A673 (cell line): ENCODE measurements at regions of chr3 and their contacts with region 1.

Region 1: GRCh38 chr3:74613521-74614106 is 845 bp downstream of the CNTN3 start:
- DNase-seq: no peak
- H3K4me3 ChIP-seq: peak overlapping the region; percentile 38
- H3K27ac ChIP-seq: no peak overlapping the region
- H3K4me1 ChIP-seq: peaks cover 15% of the 10 kb centered on the region
- H3K27me3 ChIP-seq: no peaks in the 10 kb centered on the region
- CTCF ChIP-seq: no peak

Region 2: GRCh38 chr3:74410276-74410941 is 203.2 kb before region 1 on chr3:
- CTCF ChIA-PET with region 1: no interaction called
- POLR2A ChIA-PET with region 1: no interaction called
- intact Hi-C with region 1: no loop called
- DNase-seq: no peak
- H3K4me3 ChIP-seq: no peak overlapping the region
- H3K27ac ChIP-seq: no peak overlapping the region
- H3K4me1 ChIP-seq: no peaks in the 10 kb centered on the region
- H3K27me3 ChIP-seq: no peaks in the 10 kb centered on the region
- CTCF ChIP-seq: no peak

Region 3: GRCh38 chr3:74420538-74421124 is 193.0 kb before region 1 on chr3:
- CTCF ChIA-PET with region 1: no interaction called
- POLR2A ChIA-PET with region 1: no interaction called
- intact Hi-C with region 1: no loop called
- DNase-seq: no peak
- H3K4me3 ChIP-seq: no peak overlapping the region
- H3K27ac ChIP-seq: no peak overlapping the region
- H3K4me1 ChIP-seq: no peaks in the 10 kb centered on the region
- H3K27me3 ChIP-seq: no peaks in the 10 kb centered on the region
- CTCF ChIP-seq: no peak

Region 4: GRCh38 chr3:74651292-74651691 is 37.7 kb after region 1 on chr3:
- CTCF ChIA-PET with region 1: no interaction called
- POLR2A ChIA-PET with region 1: interaction called, 10 read pairs
- intact Hi-C with region 1: no loop called
- DNase-seq: no peak
- H3K4me3 ChIP-seq: no peak overlapping the region
- H3K27ac ChIP-seq: no peak overlapping the region
- H3K4me1 ChIP-seq: no peaks in the 10 kb centered on the region
- H3K27me3 ChIP-seq: no peaks in the 10 kb centered on the region
- CTCF ChIP-seq: no peak